Ascending aorta (tissue), 2 donors: ENCODE measurements at regions of chr2 and their contacts with region 1.

Region 1: GRCh38 chr2:101120172-101120996 is 30.8 kb downstream of the TBC1D8 start:
- DNase-seq: peak; percentile 87 to 95
- H3K4me3 ChIP-seq: no peak overlapping the region
- H3K27ac ChIP-seq: peak overlapping the region; percentile 80 to 84
- H3K4me1 ChIP-seq: peaks cover 8 to 47% of the 10 kb centered on the region in 2 donors
- H3K27me3 ChIP-seq: no peaks in the 10 kb centered on the region
- CTCF ChIP-seq: no peak

Region 2: DNA sequence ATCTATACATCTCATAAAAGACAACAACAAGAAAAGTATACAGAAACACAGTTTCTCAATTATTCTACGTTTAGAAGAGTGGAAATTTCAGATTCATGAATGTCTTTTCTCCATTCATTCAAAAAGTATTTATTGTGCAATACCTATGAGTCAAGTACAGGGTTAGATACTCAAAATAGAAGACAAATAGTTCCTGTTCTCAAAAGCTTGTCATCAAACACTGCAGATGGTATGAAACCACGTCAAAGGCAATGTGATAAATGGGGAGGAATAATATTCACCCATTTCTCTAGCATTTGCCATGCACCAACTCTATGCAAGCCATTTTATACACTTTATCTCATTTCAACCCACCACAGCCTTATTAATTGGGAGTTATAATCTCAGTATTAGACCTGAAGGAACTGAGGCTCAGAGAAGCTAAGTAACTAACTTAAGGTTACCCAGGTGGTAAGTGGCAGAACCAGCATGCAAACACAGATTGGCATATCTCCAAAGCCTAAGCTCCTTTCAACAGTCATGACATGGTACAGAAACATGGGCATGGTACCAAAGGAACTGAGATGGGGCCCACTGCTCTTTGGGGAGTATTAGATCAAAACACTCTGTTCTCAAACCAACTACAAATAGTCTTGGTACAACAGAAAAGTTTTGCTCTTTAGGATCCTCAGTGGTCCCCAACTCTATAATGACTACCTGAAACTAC is 367.6 kb before region 1 on chr2:
- intact Hi-C with region 1: loop called (anchors 10 kb)
- DNase-seq: no peak
- H3K4me3 ChIP-seq: no peak overlapping the region
- H3K27ac ChIP-seq: peak overlapping the region; percentile 49 to 50
- H3K4me1 ChIP-seq: peaks cover 8 to 35% of the 10 kb centered on the region in 2 donors
- H3K27me3 ChIP-seq: no peaks in the 10 kb centered on the region
- CTCF ChIP-seq: no peak

Region 3: GRCh38 chr2:100902833-100903405 is 217.5 kb before region 1 on chr2:
- intact Hi-C with region 1: no loop called
- DNase-seq: no peak
- H3K4me3 ChIP-seq: no peak overlapping the region
- H3K27ac ChIP-seq: no peak overlapping the region
- H3K4me1 ChIP-seq: peaks cover 0 to 3% of the 10 kb centered on the region in 2 donors
- H3K27me3 ChIP-seq: no peaks in the 10 kb centered on the region
- CTCF ChIP-seq: no peak

Region 4: GRCh38 chr2:101179982-101180381 is 59.6 kb after region 1 on chr2:
- intact Hi-C with region 1: no loop called
- DNase-seq: no peak
- H3K4me3 ChIP-seq: no peak overlapping the region
- H3K27ac ChIP-seq: no peak overlapping the region
- H3K4me1 ChIP-seq: peaks cover 0 to 3% of the 10 kb centered on the region in 2 donors
- H3K27me3 ChIP-seq: no peaks in the 10 kb centered on the region
- CTCF ChIP-seq: no peak